Motor neuron (in vitro differentiated cells): ENCODE measurements at regions of chr5 and their contacts with region 1.

Region 1: GRCh38 chr5:112174959-112175594 is 244.0 kb downstream of the EPB41L4A start:
- ATAC-seq: peak; percentile 40 to 88 (median 71)
- H3K4me3 ChIP-seq: no peak overlapping the region
- H3K27ac ChIP-seq: no peak overlapping the region
- H3K4me1 ChIP-seq: no peaks in the 10 kb centered on the region

Region 2: DNA sequence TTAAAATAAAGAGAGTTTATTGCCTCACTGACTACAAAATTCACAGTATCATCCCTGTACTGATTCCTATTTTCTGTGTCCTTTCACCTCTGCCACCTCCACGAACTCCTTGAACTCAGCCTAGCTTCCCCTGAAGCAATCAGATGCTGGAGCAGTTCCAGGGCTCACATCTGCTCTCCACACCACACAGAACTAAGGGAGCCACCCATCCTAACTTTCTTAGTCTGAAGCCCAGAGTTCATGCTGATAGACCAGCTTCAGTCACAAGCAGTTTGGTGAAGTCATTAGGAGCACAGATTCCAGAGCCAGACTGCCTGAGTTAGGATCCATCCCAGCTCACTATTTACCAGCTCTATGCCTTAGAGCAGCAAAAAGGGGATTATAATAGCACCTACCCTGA is 259.6 kb after region 1 on chr5:
- in situ Hi-C with region 1: no loop called
- ATAC-seq: peak in 3 of 8 experiments; percentile 82 to 100 (median 99)
- H3K4me3 ChIP-seq: no peak overlapping the region
- H3K27ac ChIP-seq: no peak overlapping the region
- H3K4me1 ChIP-seq: no peaks in the 10 kb centered on the region

Region 3: DNA sequence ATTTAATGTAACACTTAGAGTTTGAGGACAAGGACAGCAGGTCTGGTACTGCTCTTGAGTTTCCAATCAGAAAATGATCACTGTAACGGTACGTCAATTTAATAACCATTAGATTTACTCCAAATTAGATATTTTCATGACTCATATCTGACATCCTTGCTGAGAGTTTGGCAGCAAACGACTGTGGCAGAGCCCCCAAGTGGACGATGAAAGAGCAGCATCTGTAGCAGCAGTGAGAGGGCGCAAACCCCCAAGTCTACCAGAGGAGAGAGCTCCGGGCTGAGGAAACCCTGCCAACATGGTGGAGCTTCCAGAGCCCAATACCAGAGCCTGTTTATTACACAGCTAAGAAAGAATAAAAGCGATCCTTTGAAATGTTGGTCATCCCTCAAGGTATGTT is 317.2 kb after region 1 on chr5:
- in situ Hi-C with region 1: loop called in 1 of 9 experiments (anchors 25 kb)
- ATAC-seq: peak; percentile 45 to 100 (median 85)
- H3K4me3 ChIP-seq: no peak overlapping the region
- H3K27ac ChIP-seq: no peak overlapping the region
- H3K4me1 ChIP-seq: no peaks in the 10 kb centered on the region

Region 4: DNA sequence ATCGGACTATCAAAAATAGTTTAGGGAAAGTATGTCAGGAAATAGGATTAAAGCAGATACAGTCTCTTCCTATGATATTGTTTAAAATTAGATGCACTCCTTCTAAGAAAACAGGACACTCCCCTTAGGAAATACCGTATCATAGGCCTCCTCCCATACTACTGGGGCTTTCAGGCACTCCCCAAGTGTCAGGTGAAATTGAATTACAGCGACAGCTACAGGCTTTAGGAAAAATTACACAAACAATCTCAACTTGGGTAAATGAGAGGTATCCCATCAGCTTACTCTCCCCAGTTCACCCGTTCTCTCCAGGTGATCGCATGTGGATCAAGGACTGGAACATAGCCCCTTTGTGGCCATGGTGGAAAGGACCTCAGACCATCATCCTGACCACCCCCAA is 354.4 kb after region 1 on chr5:
- in situ Hi-C with region 1: no loop called
- ATAC-seq: no peak
- H3K4me3 ChIP-seq: no peak overlapping the region
- H3K27ac ChIP-seq: no peak overlapping the region
- H3K4me1 ChIP-seq: no peaks in the 10 kb centered on the region